Mammary epithelial cell (primary cell): ENCODE measurements at regions of chr7 and their contacts with region 1.

Region 1: DNA sequence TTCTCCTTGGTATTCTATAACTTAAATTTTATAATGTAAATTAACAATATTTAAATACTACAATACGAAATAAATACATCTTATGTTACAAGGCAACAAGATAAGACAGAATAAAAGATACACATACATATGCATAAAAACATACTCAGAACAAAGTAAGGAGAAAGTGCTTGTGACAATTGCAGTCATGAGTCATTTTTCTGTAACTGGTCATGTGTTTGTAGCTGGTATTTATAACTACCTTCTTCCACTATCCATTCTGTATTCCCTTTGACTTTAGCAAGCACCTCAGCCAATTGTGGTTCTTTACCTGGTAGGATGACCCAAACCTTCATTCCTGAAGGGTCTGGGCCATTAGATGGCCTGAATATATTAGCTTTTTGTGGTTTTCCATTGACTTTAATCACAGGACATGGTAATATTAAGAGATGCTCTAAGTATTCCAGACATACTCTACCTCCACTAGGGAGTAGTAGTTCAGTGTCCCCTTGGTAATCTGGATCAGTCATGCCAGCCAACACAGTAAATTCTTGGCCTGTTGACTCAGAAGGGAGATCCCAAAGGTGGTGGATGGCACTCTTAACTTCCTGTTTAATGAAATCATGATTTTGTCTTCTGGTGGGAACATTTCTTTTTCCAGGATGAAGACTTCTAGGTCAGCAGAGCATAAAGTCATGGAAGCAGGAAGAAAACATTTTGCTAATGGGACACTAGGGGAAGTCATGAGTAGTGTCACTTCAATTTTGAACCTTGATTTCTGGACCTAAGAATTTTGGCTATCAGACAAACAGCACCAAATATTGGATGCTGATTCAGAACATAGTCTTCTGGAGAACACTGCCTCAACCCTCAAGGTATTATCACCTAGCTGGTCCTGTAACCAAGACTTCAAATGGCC is 733.7 kb upstream of the IGFBP3 start:
- DNase-seq: peak; percentile 86
- H3K4me3 ChIP-seq: no peak overlapping the region
- H3K27ac ChIP-seq: peak overlapping the region; percentile 73
- H3K4me1 ChIP-seq: peaks cover 35% of the 10 kb centered on the region
- H3K27me3 ChIP-seq: no peaks in the 10 kb centered on the region
- CTCF ChIP-seq: peak in 1 of 2 donors; percentile 0

Region 2: DNA sequence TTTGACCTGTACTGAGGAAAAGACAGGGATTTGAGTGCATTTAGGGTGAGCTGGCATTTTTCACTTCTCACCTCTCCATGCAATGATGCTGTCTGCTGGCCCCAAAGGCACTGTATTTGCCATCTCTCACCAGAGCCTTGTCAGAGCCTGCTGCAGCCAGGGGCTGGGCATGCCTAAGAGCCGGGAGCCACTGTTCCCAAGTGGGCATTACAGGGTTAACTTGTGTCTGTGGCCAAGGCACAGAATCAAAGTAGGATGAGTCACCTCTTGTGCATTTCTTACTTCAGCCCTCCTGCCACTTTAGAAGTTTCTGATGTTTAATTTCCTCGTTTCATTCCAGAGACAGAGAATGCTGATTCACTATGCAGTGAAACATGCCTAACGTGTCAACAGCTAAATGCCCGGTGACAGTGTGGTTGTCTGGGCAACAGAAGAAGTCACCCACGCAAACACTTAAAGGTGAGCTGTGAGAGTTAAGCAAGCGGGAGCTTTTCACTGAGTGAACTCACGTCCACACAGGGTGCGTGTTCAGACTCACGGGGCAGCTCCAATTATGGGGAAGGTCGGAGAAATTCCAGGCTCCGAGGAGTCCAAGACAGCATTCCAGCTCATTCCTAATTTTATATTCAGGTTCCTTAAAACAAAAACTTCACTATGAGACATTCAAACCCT is 676.6 kb before region 1 on chr7:
- CTCF ChIA-PET with region 1: no interaction called
- dilution Hi-C with region 1: no loop called
- in situ Hi-C with region 1: no loop called
- intact Hi-C with region 1: loop called (anchors 2 kb)
- DNase-seq: peak; percentile 99
- H3K4me3 ChIP-seq: no peak overlapping the region
- H3K27ac ChIP-seq: peak overlapping the region; percentile 98
- H3K4me1 ChIP-seq: peaks cover 25% of the 10 kb centered on the region
- H3K27me3 ChIP-seq: no peaks in the 10 kb centered on the region
- CTCF ChIP-seq: no peak

Region 3: GRCh38 chr7:46454816-46455215 is 200.0 kb before region 1 on chr7:
- CTCF ChIA-PET with region 1: no interaction called
- dilution Hi-C with region 1: no loop called
- in situ Hi-C with region 1: no loop called
- intact Hi-C with region 1: loop called (anchors 10 kb)
- DNase-seq: no peak
- H3K4me3 ChIP-seq: no peak overlapping the region
- H3K27ac ChIP-seq: no peak overlapping the region
- H3K4me1 ChIP-seq: peaks cover 29% of the 10 kb centered on the region
- H3K27me3 ChIP-seq: no peaks in the 10 kb centered on the region
- CTCF ChIP-seq: no peak

Region 4: GRCh38 chr7:46544374-46545008 is 110.3 kb before region 1 on chr7:
- CTCF ChIA-PET with region 1: no interaction called
- dilution Hi-C with region 1: no loop called
- in situ Hi-C with region 1: no loop called
- intact Hi-C with region 1: loop called (anchors 1 kb)
- DNase-seq: peak; percentile 84
- H3K4me3 ChIP-seq: no peak overlapping the region
- H3K27ac ChIP-seq: peak overlapping the region; percentile 95
- H3K4me1 ChIP-seq: peaks cover 22% of the 10 kb centered on the region
- H3K27me3 ChIP-seq: no peaks in the 10 kb centered on the region
- CTCF ChIP-seq: no peak

Region 5: GRCh38 chr7:46776790-46777189 is 122.0 kb after region 1 on chr7:
- CTCF ChIA-PET with region 1: no interaction called
- dilution Hi-C with region 1: no loop called
- in situ Hi-C with region 1: no loop called
- intact Hi-C with region 1: loop called (anchors 5 kb)
- DNase-seq: peak; percentile 16
- H3K4me3 ChIP-seq: no peak overlapping the region
- H3K27ac ChIP-seq: no peak overlapping the region
- H3K4me1 ChIP-seq: no peaks in the 10 kb centered on the region
- H3K27me3 ChIP-seq: no peaks in the 10 kb centered on the region
- CTCF ChIP-seq: peak; percentile 49 to 58

Region 6: GRCh38 chr7:47227762-47228177 is 573.0 kb after region 1 on chr7:
- CTCF ChIA-PET with region 1: no interaction called
- dilution Hi-C with region 1: no loop called
- in situ Hi-C with region 1: no loop called
- intact Hi-C with region 1: no loop called
- DNase-seq: peak; percentile 65
- H3K4me3 ChIP-seq: no peak overlapping the region
- H3K27ac ChIP-seq: no peak overlapping the region
- H3K4me1 ChIP-seq: no peaks in the 10 kb centered on the region
- H3K27me3 ChIP-seq: no peaks in the 10 kb centered on the region
- CTCF ChIP-seq: no peak